PC-9 (cell line): ENCODE measurements at regions of chr20 and their contacts with region 1.

Region 1: DNA sequence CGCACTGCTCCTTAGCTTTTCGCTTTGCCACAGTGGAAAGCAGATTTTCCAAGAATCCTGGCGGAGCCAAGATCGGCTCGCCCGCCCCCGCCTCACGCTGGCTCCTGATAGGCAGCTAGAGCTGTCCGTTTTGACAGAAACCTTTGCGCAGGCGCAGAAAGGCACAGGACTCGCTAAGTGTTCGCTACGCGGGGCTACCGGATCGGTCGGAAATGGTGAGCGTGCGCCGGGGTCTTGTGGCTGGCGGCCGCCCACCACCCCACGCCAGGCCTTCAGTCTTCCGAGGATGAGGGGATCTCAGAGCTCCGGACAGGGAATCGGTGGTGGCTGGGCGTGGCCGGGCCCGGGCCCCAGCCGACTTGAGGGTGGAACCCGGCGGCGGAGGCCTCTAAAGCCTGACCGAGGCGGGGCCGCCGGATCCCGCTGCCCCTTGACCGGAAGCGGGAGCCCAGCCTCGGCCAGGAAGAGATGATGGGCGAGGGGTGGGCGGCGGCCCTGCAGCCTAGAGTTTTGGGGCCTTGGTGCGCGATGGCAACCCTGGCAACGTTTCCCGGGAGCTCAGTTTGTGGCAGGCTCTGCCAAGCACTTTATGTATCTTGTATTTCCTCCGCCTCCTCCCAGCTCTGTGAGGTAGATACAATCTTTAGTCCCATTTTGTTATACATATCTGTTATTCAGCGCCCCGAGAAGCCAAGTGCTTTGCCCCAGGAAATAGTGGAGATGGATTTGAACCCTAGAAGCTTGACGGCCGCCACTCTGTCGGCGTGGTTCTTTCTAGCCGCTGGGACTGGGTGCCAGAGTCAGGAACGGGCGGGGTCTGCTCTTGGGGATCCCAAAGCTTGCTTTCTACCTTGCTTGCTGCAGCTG is at the start of gene DYNLRB1:
- DNase-seq: peak; percentile 82 to 97
- H3K4me3 ChIP-seq: peak within 1 kb of the TSS; percentile 95
- H3K27ac ChIP-seq: peak within 1 kb of the TSS; percentile 69
- H3K4me1 ChIP-seq: peaks cover 9% of the 10 kb centered on the region
- H3K27me3 ChIP-seq: no peaks in the 10 kb centered on the region
- CTCF ChIP-seq: no peak
- total RNA-seq, gene DYNLRB1: 145 and 179 TPM in 2 replicates

Region 2: DNA sequence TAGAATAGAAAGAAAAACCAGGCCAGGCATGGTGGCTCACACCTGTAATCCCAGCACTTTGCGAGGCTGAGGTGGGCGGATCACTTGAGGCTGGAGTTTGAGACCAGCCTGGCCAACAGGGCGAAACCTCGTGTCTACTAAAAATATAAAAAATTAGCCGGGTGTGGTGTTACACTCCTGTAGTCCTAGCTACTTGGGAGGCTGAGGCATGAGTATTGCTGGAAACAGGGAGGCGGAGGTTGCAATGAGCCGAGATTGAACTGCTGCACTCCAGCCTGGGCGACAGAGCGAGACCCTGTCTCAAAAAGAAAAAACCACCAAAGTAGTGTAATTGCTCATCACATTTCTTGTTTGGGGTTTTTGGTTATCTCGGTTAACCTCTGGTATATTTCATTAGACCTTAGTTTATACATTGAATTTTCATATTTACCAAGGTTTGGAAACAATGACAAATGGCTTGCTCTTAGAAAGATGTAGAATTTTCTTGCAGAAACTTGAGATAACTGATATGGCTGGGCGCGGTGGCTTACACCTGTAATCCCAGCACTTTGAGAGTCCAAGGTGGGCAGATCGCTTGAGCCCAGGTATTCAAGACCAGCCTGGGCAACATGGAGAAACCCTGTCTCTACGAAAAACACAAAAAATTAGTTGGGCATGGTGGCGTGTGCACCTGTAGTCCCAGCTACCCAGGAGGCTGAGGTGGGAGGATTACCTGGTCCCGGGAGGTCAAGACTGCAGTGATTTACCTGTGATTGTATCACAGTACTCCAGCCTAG is 139.2 kb before region 1 on chr20:
- CTCF ChIA-PET with region 1: no interaction called
- POLR2A ChIA-PET with region 1: interaction called, 10 read pairs
- intact Hi-C with region 1: no loop called
- DNase-seq: no peak
- H3K4me3 ChIP-seq: no peak overlapping the region
- H3K27ac ChIP-seq: peak overlapping the region; percentile 39; the same call in 1 of the 2 replicates
- H3K4me1 ChIP-seq: peaks cover 20% of the 10 kb centered on the region; the same call in 1 of the 2 replicates
- H3K27me3 ChIP-seq: no peaks in the 10 kb centered on the region
- CTCF ChIP-seq: no peak

Region 3: GRCh38 chr20:34459209-34459897 is 57.1 kb before region 1 on chr20:
- CTCF ChIA-PET with region 1: no interaction called
- POLR2A ChIA-PET with region 1: interaction called, 13 read pairs
- intact Hi-C with region 1: no loop called
- DNase-seq: no peak
- H3K4me3 ChIP-seq: no peak overlapping the region
- H3K27ac ChIP-seq: peak overlapping the region; percentile 10; the same call in 1 of the 2 replicates
- H3K4me1 ChIP-seq: no peaks in the 10 kb centered on the region
- H3K27me3 ChIP-seq: no peaks in the 10 kb centered on the region
- CTCF ChIP-seq: no peak